ENCODE measurements at regions of chr12 and their contacts with region 1.

Region 1: DNA sequence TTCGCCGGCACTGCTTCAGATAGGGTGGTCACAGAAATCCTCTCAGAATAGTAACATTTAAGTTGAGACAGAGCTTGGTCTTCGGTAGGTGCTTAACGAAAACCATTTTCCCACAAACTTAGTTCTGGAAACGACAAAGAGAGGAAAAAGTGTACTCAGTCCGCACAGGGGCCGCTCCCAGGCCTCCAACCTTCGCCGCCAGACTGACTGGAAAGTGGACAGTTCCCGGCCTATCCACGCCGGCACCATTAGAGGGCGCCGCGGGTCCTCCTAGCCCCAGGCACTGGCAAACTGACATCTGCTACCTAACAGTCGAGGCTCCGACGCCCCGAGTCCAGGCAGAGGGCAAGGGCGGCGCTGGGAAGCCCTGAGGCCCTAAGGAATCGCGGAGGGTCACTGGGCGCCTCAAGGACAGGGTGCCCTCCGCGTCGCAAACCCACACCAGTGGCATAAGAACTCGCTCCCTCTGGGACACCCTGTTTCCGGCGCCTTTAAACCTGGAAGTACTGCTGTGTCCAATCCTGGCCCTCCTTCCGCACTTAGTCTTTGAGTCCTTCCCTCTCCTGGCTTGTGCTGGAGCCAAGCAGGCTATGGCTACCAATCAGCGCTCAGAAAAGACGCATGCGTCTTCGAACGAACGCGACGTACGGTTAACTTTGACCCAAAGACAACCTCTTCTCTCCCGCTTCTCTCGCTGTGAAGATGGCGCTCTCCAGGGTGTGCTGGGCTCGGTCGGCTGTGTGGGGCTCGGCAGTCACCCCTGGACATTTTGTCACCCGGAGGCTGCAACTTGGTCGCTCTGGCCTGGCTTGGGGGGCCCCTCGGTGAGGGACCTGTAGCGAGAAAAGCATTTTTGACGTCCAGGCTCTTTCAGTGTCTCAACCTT is at the start of gene LETMD1:
- DNase-seq: peak; percentile 98
- H3K4me3 ChIP-seq: peak within 1 kb of the TSS; percentile 79 to 90 (median 80)
- H3K27ac ChIP-seq: peak within 1 kb of the TSS; percentile 53
- H3K4me1 ChIP-seq: peaks cover 9% of the 10 kb centered on the region
- H3K27me3 ChIP-seq: no peaks in the 10 kb centered on the region
- CTCF ChIP-seq: peak; percentile 88 to 96
- total RNA-seq, gene LETMD1: 40.8 to 54.9 TPM

Region 2: DNA sequence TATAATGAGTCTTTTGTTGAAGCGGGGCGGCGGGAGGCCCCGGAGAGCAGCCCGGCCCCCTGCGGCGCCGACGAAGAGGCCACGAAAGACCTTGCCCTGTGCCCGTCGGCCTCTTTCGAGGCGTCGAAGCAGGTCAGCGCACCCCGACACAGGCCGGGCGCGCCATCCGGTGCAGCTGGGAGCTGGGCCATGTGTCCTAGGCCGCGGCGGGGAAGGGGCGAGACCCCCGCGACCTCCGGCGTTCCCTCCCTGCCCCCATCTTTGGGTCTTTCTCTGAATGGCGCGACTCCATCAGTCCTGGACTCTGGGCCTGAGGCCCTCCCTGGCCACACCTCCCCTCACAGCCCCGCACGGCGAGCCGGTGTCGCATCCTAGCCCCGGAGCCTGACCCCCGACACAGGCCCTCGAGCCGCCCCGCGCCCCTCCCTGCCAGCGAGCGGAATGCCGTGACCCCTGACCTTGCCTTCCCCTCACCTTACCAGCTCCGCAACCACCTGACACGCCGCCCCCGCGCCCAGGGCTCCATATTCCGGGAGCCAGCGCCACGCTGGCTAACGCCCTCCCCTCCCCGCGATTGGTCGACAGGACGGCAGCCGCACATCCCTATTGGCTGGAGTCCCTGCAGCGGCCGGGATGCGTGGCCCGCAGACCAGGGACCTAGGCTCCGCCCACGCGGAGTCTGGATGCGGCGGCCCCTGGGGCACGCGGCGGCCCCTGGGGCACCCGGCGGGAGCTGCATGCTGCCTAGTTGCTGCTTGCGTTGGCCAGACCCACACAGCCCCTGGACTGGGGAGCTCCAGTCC is 21.9 kb before region 1 on chr12 and contains the start of gene SLC11A2:
- CTCF ChIA-PET with region 1: interaction called, 3 read pairs
- dilution Hi-C with region 1: no loop called
- in situ Hi-C with region 1: no loop called
- intact Hi-C with region 1: loop called (anchors 2 kb)
- DNase-seq: peak; percentile 95
- H3K4me3 ChIP-seq: peak within 1 kb of the TSS; percentile 73 to 87 (median 82)
- H3K27ac ChIP-seq: peak within 1 kb of the TSS; percentile 98
- H3K4me1 ChIP-seq: peaks cover 39% of the 10 kb centered on the region
- H3K27me3 ChIP-seq: no peaks in the 10 kb centered on the region
- CTCF ChIP-seq: no peak
- total RNA-seq, gene SLC11A2: 42.5 to 56.3 TPM

Region 3: DNA sequence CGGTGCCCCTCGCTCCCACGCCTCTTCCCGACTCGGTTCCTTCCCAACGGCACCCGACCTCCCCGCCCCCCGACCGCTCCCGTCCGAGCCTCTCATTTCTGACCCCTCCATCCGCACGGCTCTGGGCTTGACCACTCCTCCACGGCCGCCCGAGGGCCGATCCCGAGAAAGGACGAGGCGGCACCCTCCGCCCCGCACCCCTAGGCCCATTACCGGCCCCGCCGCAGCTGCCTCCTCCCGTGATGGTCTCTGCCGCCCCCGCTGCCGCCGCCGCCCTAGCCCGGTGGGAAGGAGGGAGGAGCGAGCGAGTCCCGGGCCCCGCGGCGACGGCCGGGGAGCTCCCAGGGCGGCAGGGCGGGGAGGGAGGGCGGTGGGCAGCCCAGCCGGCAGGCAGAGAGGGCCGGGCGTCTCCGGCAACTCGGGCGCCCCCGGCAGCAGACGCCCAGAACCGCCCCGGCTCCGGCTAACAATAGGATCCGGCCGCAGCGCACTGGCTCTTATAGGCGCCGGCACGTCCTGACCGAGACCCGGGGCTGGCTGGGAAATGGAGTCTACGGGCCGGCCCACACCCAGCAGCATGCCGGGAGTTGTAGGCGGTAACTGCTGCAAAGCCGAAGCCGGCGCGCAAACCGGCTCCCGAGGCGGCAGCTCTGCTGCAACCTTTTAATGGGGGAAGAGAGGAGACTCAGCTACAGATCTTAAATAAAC is 35.4 kb after region 1 on chr12 and contains the start of gene CSRNP2:
- CTCF ChIA-PET with region 1: no interaction called
- dilution Hi-C with region 1: no loop called
- in situ Hi-C with region 1: no loop called
- intact Hi-C with region 1: loop called (anchors 1 kb)
- DNase-seq: peak; percentile 92
- H3K4me3 ChIP-seq: peak within 1 kb of the TSS; percentile 86 to 94 (median 91)
- H3K27ac ChIP-seq: peak within 1 kb of the TSS; percentile 52
- H3K4me1 ChIP-seq: peaks cover 8% of the 10 kb centered on the region
- H3K27me3 ChIP-seq: no peaks in the 10 kb centered on the region
- CTCF ChIP-seq: no peak
- total RNA-seq, gene CSRNP2: 40.1 to 53.3 TPM

Region 4: GRCh38 chr12:51103977-51104376 is 56.1 kb after region 1 on chr12:
- CTCF ChIA-PET with region 1: no interaction called
- dilution Hi-C with region 1: no loop called
- in situ Hi-C with region 1: no loop called
- intact Hi-C with region 1: no loop called
- DNase-seq: no peak
- H3K4me3 ChIP-seq: no peak overlapping the region
- H3K27ac ChIP-seq: no peak overlapping the region
- H3K4me1 ChIP-seq: no peaks in the 10 kb centered on the region
- H3K27me3 ChIP-seq: no peaks in the 10 kb centered on the region
- CTCF ChIP-seq: no peak

Region 5: GRCh38 chr12:51192284-51192671 is 144.4 kb after region 1 on chr12:
- CTCF ChIA-PET with region 1: no interaction called
- dilution Hi-C with region 1: no loop called
- in situ Hi-C with region 1: no loop called
- intact Hi-C with region 1: loop called (anchors 1 kb)
- DNase-seq: no peak
- H3K4me3 ChIP-seq: no peak overlapping the region
- H3K27ac ChIP-seq: no peak overlapping the region
- H3K4me1 ChIP-seq: no peaks in the 10 kb centered on the region
- H3K27me3 ChIP-seq: no peaks in the 10 kb centered on the region
- CTCF ChIP-seq: peak in 1 of 2 donors; percentile 18

Region 6: DNA sequence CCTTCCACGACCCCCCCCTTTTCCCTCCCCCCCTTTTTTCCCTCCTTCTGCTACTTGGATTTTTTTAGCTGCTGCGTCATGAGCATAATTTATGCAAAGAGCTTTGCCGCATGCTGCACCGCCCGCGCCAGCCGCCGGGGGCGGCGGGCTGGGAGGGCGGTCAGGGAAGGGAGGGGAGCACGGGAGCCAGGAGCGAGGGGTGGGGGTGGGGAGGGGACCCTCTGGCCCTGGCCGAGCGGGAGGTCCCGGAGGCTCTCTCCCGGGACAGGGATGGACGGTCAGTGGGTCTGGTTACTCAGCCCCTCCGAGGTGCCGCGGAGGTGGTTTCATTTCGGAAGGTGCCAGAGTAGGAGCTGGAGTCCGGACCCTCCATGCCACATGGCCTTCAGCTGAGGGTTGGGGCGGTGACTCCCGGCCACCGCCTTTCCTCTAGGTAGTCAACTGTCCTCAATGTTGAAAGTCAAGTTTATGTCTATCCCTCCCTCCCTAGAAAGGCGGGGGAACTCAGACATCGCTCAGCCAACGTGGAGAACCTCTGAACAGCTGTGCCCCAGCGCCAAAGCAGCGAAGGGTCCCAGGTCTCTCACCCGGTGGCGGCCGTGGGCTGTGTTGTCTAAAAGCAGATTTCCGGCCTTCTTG is 170.2 kb after region 1 on chr12 and contains the start of gene POU6F1:
- CTCF ChIA-PET with region 1: no interaction called
- dilution Hi-C with region 1: no loop called
- in situ Hi-C with region 1: no loop called
- intact Hi-C with region 1: loop called (anchors 5 kb)
- DNase-seq: peak; percentile 61
- H3K4me3 ChIP-seq: peak within 1 kb of the TSS; percentile 55 to 86 (median 66)
- H3K27ac ChIP-seq: peak within 1 kb of the TSS; percentile 25
- H3K4me1 ChIP-seq: peaks cover 10% of the 10 kb centered on the region
- H3K27me3 ChIP-seq: no peaks in the 10 kb centered on the region
- CTCF ChIP-seq: peak; percentile 33 to 64
- total RNA-seq, gene POU6F1: 2.6 to 3.5 TPM

Region 7: DNA sequence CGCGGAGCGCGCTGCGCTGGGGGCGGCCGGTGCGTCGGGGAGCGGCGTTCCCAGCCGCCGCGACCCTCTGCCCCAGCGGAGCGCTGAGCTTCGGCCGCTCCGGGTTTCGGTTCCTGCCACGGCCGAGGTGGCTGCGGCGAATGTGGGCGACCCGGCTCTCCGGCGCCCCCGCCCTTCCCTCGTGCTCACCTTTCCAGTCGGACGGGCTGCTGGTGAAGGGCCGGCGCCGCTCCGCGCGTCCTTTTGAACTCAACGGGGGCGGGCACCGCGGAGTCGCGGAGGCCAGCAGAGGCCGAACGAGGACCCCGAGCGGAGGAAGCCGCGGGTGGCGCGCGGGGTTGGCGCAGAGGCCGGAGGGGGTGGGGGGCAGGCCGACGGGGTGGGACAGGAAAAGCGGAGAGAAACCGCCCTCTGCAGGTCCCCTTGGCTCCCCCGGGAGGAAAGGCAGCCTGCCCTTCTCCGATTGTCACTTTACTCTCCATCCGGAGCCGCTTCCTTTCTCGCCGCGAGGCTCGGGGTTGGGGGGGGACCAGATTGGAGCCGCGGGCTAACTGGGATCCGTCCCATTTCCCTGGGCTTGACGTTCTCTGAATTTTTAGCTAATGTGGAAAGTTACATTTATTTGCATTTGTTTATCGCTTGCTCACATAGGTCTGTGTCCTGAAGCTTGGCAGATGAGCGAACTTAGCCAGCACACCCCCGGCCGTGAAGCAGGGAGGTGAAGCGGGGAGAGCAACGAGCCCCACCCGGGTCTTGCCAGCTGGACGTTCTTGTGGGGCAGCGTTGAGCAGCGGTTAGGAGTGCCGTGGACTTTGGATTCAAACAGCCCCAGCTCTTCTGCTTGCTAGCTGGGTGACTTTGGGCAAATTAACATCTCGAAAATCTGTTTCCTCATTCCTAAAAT is 222.4 kb after region 1 on chr12 and contains the start of gene SMAGP:
- CTCF ChIA-PET with region 1: no interaction called
- dilution Hi-C with region 1: no loop called
- in situ Hi-C with region 1: no loop called
- intact Hi-C with region 1: loop called (anchors 5 kb)
- DNase-seq: peak; percentile 69
- H3K4me3 ChIP-seq: peak within 1 kb of the TSS; percentile 49 to 68 (median 55)
- H3K27ac ChIP-seq: peak within 1 kb of the TSS; percentile 80
- H3K4me1 ChIP-seq: peaks cover 17% of the 10 kb centered on the region
- H3K27me3 ChIP-seq: no peaks in the 10 kb centered on the region
- CTCF ChIP-seq: no peak
- total RNA-seq, gene SMAGP: 21.2 to 34.3 TPM

Region 8: DNA sequence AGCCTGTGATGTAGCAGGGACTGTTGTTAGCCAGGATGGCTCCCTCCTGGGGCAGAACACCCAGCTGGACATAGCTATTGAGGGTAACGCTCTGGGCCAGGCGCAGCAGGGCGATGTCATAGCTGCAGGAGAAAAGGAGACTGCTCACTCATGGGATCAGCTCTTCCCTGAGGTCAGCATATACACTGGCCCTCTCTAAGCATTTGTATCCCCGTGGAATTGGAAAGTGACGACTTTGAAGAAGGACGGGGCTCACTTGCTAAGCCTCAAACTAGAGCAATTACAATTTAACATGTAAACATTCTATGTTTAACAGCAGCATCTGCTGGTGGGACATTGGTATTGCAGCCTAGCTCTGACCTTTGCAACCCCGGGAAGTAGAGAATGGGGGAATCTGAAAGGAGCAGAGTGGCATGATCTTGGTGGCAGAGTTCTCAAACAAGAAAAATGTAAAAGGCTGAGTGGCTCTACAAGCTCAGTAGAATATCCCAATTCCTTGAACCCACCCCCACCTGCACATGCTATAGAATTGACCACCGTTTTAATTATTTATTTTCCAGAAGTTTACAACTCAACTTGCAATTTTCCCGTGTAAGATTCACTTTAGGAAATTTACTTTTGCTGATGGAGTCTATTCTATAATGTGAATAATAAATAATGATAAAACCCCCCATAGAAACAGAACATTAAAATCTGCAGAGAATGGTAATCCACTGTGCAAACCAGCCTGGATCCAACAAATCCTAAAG is 293.5 kb after region 1 on chr12:
- CTCF ChIA-PET with region 1: no interaction called
- dilution Hi-C with region 1: no loop called
- in situ Hi-C with region 1: loop called in 1 of 2 experiments (anchors 10 kb)
- intact Hi-C with region 1: loop called (anchors 1 kb)
- DNase-seq: peak; percentile 48
- H3K4me3 ChIP-seq: no peak overlapping the region
- H3K27ac ChIP-seq: no peak overlapping the region
- H3K4me1 ChIP-seq: peaks cover 2% of the 10 kb centered on the region
- H3K27me3 ChIP-seq: no peaks in the 10 kb centered on the region
- CTCF ChIP-seq: peak; percentile 99 to 100

Measured in mammary epithelial cell (primary cell).